HEK293T (cell line): ENCODE measurements at regions of chr17 and their contacts with region 1.

Region 1: GRCh38 chr17:41966463-41967140 is at the start of gene CNP:
- DNase-seq: peak; percentile 90

Region 2: DNA sequence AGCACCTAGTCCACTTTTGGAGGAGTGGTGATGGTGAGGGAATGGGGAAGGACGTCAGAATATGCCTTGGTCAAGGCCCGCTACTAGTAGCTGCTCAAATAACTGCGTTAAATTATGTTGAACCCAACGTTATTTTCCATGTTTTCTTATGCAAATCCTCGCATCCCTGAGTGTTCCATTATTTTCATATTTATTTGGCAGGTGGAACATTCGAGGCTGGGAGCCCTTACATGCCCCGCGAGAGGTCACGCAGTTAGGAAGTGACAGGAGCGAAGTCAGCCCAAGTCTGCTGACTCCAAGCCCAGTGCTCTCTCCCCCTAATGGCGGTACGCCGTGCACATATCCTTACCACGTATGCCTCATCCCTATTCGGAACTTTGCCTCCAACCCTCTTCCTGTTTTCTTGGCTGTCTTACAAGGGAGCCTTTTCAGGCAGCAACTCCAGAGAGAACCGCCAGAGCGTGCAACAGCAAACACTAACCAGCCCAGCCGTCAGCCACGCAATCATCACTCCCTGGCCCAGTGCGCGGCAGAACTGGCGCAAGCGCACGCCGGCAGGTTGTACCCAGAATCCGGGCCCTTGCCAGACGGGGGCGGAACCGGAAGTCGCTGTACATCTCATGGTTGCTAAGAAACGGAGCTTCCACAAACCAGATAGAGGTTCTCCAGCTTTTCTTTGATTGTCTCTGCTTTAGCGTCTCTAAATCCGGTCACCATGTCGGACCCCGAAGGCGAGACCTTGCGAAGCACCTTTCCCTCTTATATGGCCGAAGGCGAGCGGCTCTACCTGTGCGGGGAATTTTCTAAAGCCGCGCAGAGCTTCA is 36.4 kb before region 1 on chr17 and contains the start of gene ODAD4:
- CTCF ChIA-PET with region 1: no interaction called
- POLR2A ChIA-PET with region 1: interaction called, 26 read pairs
- DNase-seq: peak; percentile 99

Region 3: GRCh38 chr17:42002792-42003301 is 36.2 kb after region 1 on chr17:
- CTCF ChIA-PET with region 1: interaction called, 3 read pairs
- POLR2A ChIA-PET with region 1: interaction called, 11 read pairs
- DNase-seq: no peak

Region 4: DNA sequence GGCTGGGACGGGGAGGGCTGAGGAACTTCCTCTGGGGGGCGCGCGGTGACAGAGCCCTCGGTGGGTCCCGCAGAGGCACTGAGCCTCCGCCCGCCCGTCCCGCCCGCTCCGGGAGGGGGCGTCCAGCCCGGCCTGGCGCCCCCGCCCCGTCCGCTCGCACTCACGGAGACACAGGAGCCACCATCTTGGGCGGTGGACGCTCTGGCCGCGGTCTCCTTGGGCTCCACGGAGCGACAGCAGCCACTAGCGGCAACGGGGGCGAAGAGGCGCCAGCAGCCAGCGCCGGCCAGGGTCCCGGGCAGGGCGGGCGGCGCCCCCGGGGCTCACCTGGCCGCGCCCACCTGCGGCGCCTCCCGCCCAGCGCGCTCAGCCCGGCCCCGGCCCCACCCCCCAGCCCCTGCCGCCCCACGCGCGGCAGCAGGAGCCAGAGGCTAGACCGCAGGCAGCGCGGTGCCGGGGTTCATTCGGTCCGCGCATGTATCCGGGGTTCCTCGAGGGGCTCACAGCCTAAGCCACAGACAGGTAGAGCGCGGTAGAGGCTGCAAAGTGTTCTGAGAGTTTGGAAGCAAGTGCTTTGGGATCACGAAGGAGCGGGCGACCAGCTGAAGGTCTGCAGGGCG is 83.9 kb after region 1 on chr17 and contains the start of gene C17orf113:
- CTCF ChIA-PET with region 1: no interaction called
- POLR2A ChIA-PET with region 1: no interaction called
- DNase-seq: peak; percentile 79

Region 5: GRCh38 chr17:42112552-42113176 is 146.1 kb after region 1 on chr17 and contains the start of gene DHX58:
- CTCF ChIA-PET with region 1: no interaction called
- POLR2A ChIA-PET with region 1: interaction called, 14 read pairs
- DNase-seq: no peak

Region 6: DNA sequence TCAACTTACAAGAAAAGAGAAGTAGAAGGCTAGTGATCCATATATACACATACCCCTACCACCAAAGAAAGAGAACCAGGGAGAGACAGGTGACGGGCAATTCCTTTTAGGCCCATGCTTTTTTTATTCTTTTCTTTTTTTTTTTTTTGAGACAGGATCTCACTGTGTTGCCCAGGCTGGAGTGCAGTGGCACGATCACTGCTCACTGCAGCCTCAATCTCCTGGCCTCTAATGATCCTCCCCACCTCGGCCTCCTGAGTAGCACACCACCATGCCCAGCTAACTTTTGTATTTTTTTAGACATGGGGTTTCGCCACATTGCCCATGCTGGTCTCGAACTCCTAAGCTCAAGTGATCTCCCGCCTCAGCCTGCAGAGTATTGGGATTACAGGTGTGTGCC is 160.8 kb after region 1 on chr17:
- CTCF ChIA-PET with region 1: no interaction called
- POLR2A ChIA-PET with region 1: no interaction called
- DNase-seq: no peak